Activated CD4-positive, alpha-beta memory T cell treated with anti-CD3 and anti-CD28 coated beads, Interleukin-2, amount 10 ng/mL, durations not matched to agents 7 days and 5 days (primary cell): ENCODE measurements at regions of chr3 and their contacts with region 1.

Region 1: DNA sequence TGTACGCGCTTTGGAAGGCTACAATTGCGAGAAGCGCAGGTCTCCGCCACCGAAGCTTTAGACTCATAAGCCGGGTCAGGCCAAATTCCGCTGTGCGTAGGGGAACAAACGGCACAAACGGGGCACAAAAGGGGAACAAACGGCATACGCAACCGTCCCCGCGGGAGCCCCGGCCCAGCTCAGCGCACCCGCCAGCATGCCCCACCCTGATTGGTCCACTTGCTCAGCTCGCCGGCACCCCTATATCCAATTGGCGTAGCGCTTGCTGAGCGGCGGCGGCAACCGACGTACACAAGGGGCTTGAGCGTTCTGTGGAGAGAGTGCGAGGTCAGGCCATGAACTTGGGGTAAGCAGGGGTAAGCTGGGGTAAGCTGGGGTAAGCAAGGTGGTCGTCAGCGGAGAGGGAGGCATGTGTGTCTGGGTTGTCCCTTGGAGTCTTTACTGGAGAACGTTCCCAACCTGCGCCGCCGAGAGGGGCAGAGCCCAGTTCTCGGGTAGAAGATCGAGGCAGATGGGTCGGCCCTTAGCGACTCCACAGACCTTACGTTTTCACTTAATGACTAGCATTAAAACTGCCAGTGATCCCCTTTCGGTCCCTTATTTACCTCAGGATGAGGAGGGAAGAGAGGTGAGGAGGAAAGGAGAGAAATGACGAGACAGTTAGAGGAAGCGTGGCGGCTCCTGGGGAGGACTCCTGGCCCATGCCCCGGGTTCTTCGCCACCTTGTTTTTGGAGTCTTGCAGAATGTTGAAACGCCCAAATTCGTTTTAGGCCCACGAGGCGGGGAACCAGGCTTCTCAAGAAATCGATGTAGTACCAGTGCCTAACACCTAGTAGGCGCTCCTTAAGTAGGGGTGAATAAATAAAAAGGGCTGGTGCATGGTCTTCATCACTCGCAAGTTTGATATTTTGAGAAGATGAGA is at the start of gene CCDC66:
- DNase-seq: peak; percentile 95
- H3K4me3 Mint-ChIP-seq: peak within 1 kb of the TSS; percentile 90
- H3K27ac Mint-ChIP-seq: peak within 1 kb of the TSS; percentile 94
- H3K4me1 Mint-ChIP-seq: peaks cover 24% of the 10 kb centered on the region
- H3K27me3 Mint-ChIP-seq: peaks cover 6% of the 10 kb centered on the region
- total RNA-seq, gene CCDC66: 29.6 to 32.5 TPM

Region 2: DNA sequence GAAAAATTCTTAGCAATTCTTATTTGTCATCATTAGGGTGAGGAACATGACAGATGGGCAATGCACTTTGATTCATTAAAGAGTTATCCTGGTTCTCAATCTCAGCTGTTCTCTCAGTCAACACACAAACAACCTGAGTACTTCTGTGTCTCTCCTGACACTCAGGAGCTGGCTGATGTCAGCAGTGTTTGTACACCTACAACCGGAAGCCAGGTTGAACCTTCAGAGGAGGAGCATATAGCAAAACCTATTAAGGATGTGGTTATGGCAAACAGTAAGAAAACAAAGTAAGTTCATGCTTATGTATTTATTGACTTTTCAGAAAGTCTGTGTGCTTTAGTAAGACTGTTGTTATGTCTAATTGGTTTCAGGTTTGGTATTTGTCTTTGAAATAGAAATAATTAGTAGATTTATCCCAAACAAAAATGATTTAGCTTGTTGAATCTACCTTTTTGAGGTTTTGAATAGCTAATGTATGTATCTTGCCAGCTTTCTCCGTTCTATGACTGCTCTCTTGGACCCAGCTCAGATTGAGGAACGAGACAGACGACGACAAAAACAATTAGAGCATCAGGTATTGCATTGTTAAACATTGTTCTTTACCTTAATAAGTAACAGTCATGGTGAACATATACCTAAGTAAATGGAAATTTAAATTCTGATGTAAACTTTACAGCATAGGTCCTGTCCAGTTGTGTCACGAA is 36.4 kb after region 1 on chr3:
- CTCF ChIA-PET with region 1: interaction called, 7 read pairs
- POLR2A ChIA-PET with region 1: interaction called, 16 read pairs
- DNase-seq: peak; percentile 63
- H3K4me3 Mint-ChIP-seq: peak overlapping the region; percentile 23
- H3K27ac Mint-ChIP-seq: peak overlapping the region; percentile 76
- H3K4me1 Mint-ChIP-seq: peaks cover 25% of the 10 kb centered on the region
- H3K27me3 Mint-ChIP-seq: no peaks in the 10 kb centered on the region